Esophagus muscularis mucosa (tissue), 4 donors: ENCODE measurements at regions of chr20 and their contacts with region 1.

Region 1: GRCh38 chr20:49713753-49714712 is at the start of gene B4GALT5:
- DNase-seq: no peak
- H3K4me3 ChIP-seq: peak within 1 kb of the TSS; percentile 83 to 99 (median 97)
- H3K27ac ChIP-seq: peak within 1 kb of the TSS; percentile 88 to 96 (median 94)
- H3K4me1 ChIP-seq: peaks cover 22 to 48% (median 44%) of the 10 kb centered on the region in 4 donors
- H3K27me3 ChIP-seq: no peaks in the 10 kb centered on the region
- CTCF ChIP-seq: no peak
- EP300 ChIP-seq: no peak
- POLR2A ChIP-seq: no peak
- total RNA-seq, gene B4GALT5: 23.3 to 51.2 (median 37.1) TPM

Region 2: GRCh38 chr20:49676581-49677291 is 37.3 kb before region 1 on chr20:
- intact Hi-C with region 1: loop called (anchors 5 kb)
- DNase-seq: no peak
- H3K4me3 ChIP-seq: no peak overlapping the region
- H3K27ac ChIP-seq: peak overlapping the region in 1 of 4 donors; percentile 16
- H3K4me1 ChIP-seq: peaks cover 65 to 91% (median 89%) of the 10 kb centered on the region in 4 donors
- H3K27me3 ChIP-seq: no peaks in the 10 kb centered on the region
- CTCF ChIP-seq: no peak
- EP300 ChIP-seq: no peak
- POLR2A ChIP-seq: no peak

Region 3: DNA sequence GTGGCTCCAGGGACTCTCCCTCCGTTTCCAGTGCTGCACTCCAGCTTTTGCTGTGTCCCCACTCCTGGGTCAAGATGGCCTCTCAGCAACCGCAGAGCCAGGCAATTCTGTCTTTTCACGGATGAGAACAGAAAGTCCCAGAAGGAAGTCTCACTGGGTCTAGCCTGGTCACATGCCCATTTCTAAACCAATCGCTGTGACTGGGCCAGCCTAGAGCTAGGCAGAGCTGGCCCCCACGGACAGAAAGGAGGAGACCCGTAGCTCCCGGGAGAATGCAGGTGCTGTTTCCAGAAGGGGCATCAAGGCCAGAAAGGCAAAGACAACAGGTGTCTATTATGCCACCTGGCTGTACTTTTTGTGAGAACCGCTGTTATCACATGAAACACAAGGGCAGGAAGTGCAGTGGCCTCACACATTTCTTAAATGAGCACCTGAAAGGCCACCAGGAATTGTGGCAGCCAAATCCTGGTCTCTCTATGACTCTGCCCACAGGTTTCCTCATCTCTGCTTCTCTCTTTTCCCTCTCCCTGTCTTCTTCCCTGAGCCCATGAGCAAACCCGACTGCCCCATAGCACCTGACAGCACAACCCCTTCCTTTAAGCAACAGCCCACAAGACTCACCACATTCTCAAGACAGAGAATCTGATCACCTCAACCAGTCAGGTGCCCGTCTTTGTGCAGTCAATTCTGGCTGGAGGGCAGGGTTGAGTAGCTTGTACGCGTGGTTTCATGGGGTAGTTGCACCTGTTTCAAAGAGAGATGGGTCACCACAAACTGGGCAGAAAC is 36.8 kb after region 1 on chr20:
- intact Hi-C with region 1: no loop called
- DNase-seq: no peak
- H3K4me3 ChIP-seq: no peak overlapping the region
- H3K27ac ChIP-seq: peak overlapping the region in 1 of 4 donors; percentile 20
- H3K4me1 ChIP-seq: peaks cover 18 to 36% (median 28%) of the 10 kb centered on the region in 4 donors
- H3K27me3 ChIP-seq: no peaks in the 10 kb centered on the region
- CTCF ChIP-seq: no peak
- EP300 ChIP-seq: no peak
- POLR2A ChIP-seq: no peak

Region 4: DNA sequence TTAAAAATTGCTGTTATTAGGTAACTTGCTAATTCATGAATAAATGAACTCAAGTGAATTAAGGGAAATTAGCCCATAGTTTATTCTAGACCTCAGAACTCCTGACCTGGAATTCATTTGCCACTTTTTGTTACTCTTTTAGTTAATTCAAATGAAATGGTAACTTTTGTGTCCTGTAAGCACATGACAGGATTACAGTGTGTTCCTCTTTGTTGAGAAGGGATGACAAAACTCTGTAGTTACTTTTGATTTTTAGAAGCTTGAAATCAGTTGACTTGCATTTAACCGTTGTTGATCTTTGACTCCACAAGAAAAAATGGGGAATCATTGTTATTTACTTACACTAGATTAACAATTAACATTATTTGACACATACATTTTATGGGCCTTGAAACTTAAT is 104.8 kb after region 1 on chr20:
- intact Hi-C with region 1: loop called (anchors 5 kb)
- DNase-seq: no peak
- H3K4me3 ChIP-seq: no peak overlapping the region
- H3K27ac ChIP-seq: no peak overlapping the region
- H3K4me1 ChIP-seq: peaks cover 14 to 25% (median 19%) of the 10 kb centered on the region in 4 donors
- H3K27me3 ChIP-seq: no peaks in the 10 kb centered on the region
- CTCF ChIP-seq: no peak
- EP300 ChIP-seq: no peak
- POLR2A ChIP-seq: no peak